ENCODE measurements at regions of chr11 and their contacts with region 1.

Region 1: DNA sequence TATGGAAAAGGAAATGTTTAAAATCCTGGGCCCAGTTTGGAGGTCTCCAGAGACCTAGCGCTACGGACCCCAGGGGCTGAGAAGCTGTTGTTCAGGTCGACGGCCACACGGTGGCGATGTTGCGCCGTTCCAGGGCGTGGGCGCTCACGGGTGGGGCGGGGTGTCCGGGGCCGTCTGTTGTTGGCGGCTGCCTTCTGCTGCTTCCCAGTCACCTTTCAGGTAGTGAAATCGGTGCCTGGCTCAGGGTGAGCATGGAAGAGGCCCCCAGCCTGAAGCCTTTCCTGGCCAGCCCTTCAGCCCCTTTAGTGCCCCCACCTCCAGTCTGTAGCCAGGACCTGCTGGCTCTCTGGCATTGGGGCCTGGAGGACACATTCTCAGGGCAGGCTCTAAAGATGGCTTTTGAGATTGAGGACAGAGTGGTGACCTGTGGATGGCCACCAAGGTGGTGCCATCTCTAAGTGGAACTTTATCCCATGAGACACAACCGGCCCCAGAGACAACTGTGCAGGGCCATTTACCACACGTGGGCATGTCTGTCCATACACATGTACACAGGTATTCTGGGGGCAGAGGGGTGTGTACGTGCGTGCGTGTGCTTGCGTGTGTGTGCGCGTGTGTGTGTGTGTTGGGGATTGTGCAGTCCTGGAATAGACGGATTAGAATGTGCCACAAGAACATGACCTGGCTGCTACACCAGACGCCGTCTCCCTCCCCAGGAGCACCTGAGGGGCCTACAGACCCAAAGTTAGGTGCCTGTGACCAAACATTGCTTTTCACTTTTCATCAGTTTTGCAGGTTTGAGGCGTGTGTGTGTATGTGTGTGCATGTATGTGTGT is 53.8 kb downstream of the ST14 start:
- DNase-seq: peak; percentile 72
- H3K4me3 Mint-ChIP-seq: no peak overlapping the region
- H3K27ac Mint-ChIP-seq: no peak overlapping the region
- H3K4me1 Mint-ChIP-seq: no peaks in the 10 kb centered on the region
- H3K27me3 Mint-ChIP-seq: no peaks in the 10 kb centered on the region

Region 2: GRCh38 chr11:130223291-130223971 is 10.1 kb after region 1 on chr11:
- CTCF ChIA-PET with region 1: interaction called, 15 read pairs
- intact Hi-C with region 1: no loop called
- DNase-seq: no peak
- H3K4me3 Mint-ChIP-seq: no peak overlapping the region
- H3K27ac Mint-ChIP-seq: no peak overlapping the region
- H3K4me1 Mint-ChIP-seq: no peaks in the 10 kb centered on the region
- H3K27me3 Mint-ChIP-seq: no peaks in the 10 kb centered on the region

Region 3: DNA sequence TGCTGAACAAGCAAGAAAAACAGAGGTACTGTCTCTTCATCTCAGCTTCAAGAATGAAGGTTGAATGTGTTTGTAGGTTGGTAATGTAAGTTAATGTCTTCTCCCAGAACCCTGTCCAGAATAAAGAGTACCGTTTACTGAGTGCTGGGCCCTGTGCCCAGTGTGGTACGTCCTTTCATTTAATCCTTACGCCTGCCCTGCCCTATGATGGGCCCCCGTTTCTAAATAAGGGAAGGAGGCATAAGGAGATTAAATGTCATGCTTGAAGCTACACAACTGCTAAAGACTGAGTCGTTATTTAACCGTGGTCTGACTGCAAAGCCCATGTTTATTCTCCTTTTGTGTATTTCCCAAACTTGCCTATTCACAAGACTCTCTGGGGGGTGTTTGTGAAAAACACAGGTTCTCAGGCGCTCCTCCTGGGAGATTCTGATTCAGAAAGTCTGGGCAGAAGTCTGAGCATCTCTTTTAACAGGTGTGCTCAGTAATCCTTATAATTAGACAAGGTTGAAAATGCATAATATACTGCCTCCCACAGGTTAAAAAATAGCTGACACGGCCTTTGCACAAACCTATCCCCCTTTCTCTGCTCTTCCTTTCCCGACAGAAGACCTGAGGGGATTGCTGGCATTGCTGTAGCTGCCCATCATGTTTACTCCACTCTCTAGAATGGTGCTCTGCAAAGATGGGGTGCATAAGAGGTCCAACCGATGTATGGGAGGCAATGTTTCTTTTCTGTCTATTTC is 157.7 kb after region 1 on chr11:
- CTCF ChIA-PET with region 1: interaction called, 9 read pairs
- intact Hi-C with region 1: loop called (anchors 1 kb)
- DNase-seq: no peak
- H3K4me3 Mint-ChIP-seq: no peak overlapping the region
- H3K27ac Mint-ChIP-seq: no peak overlapping the region
- H3K4me1 Mint-ChIP-seq: no peaks in the 10 kb centered on the region
- H3K27me3 Mint-ChIP-seq: no peaks in the 10 kb centered on the region

Region 4: DNA sequence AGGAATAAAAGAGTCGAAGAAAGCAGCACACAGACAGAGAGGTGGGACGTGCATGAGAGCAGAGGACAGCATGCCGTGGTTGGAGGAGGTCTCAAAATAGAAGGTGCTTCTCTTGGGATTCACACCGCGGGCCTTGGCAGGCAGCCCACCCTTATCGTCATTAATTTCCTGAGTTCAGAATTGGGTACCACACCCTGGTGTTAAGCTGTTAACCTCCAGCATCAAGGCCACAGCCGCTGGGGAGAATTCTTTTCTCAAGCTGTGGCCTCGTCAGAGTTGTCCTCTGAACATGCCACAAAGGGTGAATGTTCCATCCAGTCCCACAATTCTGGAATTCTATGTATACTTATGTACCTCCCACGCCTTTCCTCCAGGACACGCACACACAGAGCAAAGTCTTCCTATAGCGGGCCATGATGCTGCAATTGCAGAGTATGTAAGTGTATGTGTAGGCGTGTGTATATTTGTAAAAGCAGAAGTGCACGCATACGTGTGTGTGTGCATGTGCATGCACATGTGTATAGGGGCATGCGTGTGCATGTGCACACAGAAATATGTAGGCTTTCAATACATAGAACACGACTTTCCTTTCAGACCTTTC is 176.1 kb after region 1 on chr11:
- CTCF ChIA-PET with region 1: interaction called, 4 read pairs
- intact Hi-C with region 1: loop called (anchors 1 kb)
- DNase-seq: no peak
- H3K4me3 Mint-ChIP-seq: no peak overlapping the region
- H3K27ac Mint-ChIP-seq: no peak overlapping the region
- H3K4me1 Mint-ChIP-seq: peaks cover 17% of the 10 kb centered on the region
- H3K27me3 Mint-ChIP-seq: no peaks in the 10 kb centered on the region

Measured in activated naive CD4-positive, alpha-beta T cell treated with anti-CD3 and anti-CD28 coated beads for 36 hours (primary cell).